HepG2 (cell line): ENCODE measurements at regions of chr20 and their contacts with region 1.

Region 1: GRCh38 chr20:19661717-19662636 is 96.1 kb upstream of the RIN2 start:
- DNase-seq: peak; percentile 62
- ATAC-seq: peak; percentile 80
- H3K4me3 ChIP-seq: no peak overlapping the region
- H3K27ac ChIP-seq: no peak overlapping the region
- H3K4me1 ChIP-seq: peaks cover 32% of the 10 kb centered on the region
- H3K27me3 ChIP-seq: peaks cover 0 to 20% of the 10 kb centered on the region in 2 experiments; a peak in 2 of 5 replicates
- CTCF ChIP-seq: peak; percentile 99
- EP300 ChIP-seq: no peak
- POLR2A ChIP-seq: no peak
- RAD21 ChIP-seq: peak; percentile 91

Region 2: DNA sequence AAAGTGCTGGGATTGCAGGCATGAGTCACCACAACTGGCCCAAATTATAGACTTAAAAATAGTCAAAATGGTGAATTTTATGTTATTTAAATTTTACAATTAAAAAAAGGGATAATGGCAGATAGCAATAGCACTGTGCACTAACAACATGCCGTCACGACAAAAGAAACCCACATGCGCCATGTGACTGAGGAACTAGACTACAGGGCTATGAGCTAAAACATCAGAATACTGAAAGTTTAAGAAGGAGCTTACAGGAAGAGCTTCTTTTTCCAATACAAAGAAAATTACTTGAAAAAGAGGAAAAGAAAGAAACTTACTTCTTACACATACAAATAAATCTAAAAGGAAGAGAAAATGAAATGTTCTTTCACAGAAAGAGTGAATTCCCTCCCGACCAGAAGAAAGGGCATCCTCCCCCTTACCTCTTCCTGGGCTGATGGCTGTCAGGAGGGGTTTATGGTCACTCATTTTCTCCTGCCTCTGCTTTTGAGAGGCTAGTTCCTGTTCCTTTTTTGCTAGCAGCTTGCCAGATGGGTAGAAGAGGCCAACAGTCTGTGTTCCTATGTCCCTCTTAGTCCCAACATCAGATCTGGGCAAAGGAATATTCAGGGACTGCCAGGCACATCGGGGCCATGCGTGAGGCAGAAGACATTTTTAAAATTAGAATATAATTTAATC is 1249.6 kb before region 1 on chr20:
- CTCF ChIA-PET with region 1: interaction called, 3 read pairs
- POLR2A ChIA-PET with region 1: no interaction called
- in situ Hi-C with region 1: no loop called
- intact Hi-C with region 1: loop called (anchors 10 kb)
- DNase-seq: no peak
- ATAC-seq: no peak
- H3K4me3 ChIP-seq: no peak overlapping the region
- H3K27ac ChIP-seq: no peak overlapping the region
- H3K4me1 ChIP-seq: peaks cover 13% of the 10 kb centered on the region
- H3K27me3 ChIP-seq: no peaks in the 10 kb centered on the region
- CTCF ChIP-seq: no peak
- EP300 ChIP-seq: no peak
- POLR2A ChIP-seq: no peak
- RAD21 ChIP-seq: no peak

Region 3: GRCh38 chr20:19074828-19075516 is 587.0 kb before region 1 on chr20:
- CTCF ChIA-PET with region 1: no interaction called
- POLR2A ChIA-PET with region 1: no interaction called
- in situ Hi-C with region 1: loop called (anchors 10 kb)
- intact Hi-C with region 1: loop called (anchors 1 kb)
- DNase-seq: no peak
- ATAC-seq: peak; percentile 19; the same call in 1 of the 3 replicates
- H3K4me3 ChIP-seq: no peak overlapping the region
- H3K27ac ChIP-seq: no peak overlapping the region
- H3K4me1 ChIP-seq: no peaks in the 10 kb centered on the region
- H3K27me3 ChIP-seq: peaks cover 0 to 2% of the 10 kb centered on the region in 2 experiments; a peak in 3 of 5 replicates
- CTCF ChIP-seq: no peak
- EP300 ChIP-seq: no peak
- POLR2A ChIP-seq: no peak
- RAD21 ChIP-seq: no peak

Region 4: DNA sequence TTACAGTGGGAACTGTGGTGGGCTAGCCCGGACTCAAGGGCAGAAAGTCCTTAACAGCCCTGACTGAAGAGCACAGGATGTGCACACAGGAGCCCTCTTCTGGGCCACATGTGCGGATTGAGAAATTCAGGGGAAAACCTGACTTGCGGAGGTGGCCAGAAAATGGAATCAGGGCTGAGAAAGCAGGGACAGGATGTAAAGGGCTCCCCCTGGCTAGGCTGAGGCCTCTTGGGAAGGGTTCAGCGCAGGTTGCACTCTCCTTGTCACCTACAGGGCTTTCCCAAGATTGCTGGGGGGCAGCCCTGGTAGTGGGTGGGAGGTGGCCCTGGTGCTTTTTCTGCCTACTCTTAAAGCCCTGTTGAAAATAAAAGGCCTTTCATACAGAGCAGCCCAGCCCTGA is 198.4 kb before region 1 on chr20:
- CTCF ChIA-PET with region 1: no interaction called
- POLR2A ChIA-PET with region 1: no interaction called
- in situ Hi-C with region 1: no loop called
- intact Hi-C with region 1: loop called (anchors 2 kb)
- DNase-seq: no peak
- ATAC-seq: no peak; the same call in 2 of the 3 replicates
- H3K4me3 ChIP-seq: no peak overlapping the region
- H3K27ac ChIP-seq: no peak overlapping the region
- H3K4me1 ChIP-seq: no peaks in the 10 kb centered on the region
- H3K27me3 ChIP-seq: peaks cover 0 to 11% of the 10 kb centered on the region in 2 experiments; a peak in 1 of 5 replicates
- CTCF ChIP-seq: no peak
- EP300 ChIP-seq: no peak
- POLR2A ChIP-seq: no peak
- RAD21 ChIP-seq: no peak

Region 5: DNA sequence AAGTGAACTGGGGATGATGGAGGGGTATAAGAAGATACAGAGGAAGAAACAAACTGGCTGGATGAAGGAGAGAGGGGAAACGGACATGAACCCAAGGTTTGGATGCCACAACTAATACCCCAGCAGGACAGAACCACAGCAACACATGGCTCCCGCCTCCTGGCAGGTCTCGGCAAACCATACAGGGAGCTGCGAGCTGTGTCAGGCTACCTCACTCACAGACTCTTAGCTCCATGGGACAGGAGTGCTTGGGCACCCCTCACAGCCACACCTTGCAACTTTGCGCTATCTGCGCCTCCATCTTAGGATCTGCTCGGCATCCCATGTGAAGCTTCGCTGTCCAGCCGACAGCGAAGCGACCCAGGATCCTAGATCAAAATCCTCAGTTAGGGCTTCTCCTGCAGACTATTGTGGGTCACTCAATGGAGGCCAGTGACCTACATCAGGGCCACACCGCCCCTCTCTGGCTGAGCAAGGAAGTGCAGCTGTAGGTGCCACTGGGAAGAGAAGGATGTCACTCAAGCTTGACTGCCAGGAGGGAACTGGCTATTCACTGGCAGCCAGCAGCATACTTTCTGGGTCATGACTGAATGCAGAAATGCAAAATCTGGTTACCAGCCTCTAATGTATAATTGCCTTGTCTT is 78.3 kb before region 1 on chr20:
- CTCF ChIA-PET with region 1: interaction called, 7 read pairs
- POLR2A ChIA-PET with region 1: no interaction called
- in situ Hi-C with region 1: loop called (anchors 5 kb)
- intact Hi-C with region 1: loop called (anchors 1 kb)
- DNase-seq: peak; percentile 51
- ATAC-seq: peak; percentile 89
- H3K4me3 ChIP-seq: no peak overlapping the region
- H3K27ac ChIP-seq: no peak overlapping the region
- H3K4me1 ChIP-seq: no peaks in the 10 kb centered on the region
- H3K27me3 ChIP-seq: peaks cover 4 to 53% of the 10 kb centered on the region in 2 experiments; a peak in 4 of 5 replicates
- CTCF ChIP-seq: peak; percentile 90
- EP300 ChIP-seq: no peak
- POLR2A ChIP-seq: no peak
- RAD21 ChIP-seq: peak; percentile 76

Region 6: DNA sequence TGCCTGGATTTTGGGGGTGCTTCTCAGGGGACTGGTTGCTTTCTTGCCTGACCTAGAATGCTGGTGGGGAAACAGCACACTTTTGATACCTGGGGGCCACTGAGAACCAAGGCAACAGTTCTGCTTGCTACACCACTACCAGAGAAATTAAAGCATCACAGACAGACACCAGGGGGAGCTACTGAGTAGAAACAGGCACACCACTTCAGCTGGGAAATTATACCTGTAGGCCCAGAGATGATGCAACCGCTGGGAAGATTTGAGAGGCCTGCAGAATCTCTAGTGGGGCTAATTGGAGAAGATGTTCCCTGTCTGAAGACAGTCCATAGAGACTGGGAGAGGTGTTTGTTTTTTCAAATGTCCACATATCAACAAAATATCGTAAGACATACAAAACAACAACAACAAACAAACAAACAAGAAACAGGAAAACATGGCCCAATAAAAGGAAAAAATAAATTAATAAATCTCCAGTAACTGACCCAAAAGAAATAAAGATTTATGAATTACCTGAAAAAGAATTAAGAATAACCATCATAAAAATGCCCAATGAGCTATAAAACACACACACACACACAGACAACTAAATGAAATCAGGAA is 33.3 kb before region 1 on chr20:
- CTCF ChIA-PET with region 1: interaction called, 38 read pairs
- POLR2A ChIA-PET with region 1: no interaction called
- in situ Hi-C with region 1: no loop called
- intact Hi-C with region 1: loop called (anchors 1 kb)
- DNase-seq: peak; percentile 84
- ATAC-seq: peak; percentile 96
- H3K4me3 ChIP-seq: no peak overlapping the region
- H3K27ac ChIP-seq: no peak overlapping the region
- H3K4me1 ChIP-seq: peaks cover 15% of the 10 kb centered on the region
- H3K27me3 ChIP-seq: peaks cover 0 to 5% of the 10 kb centered on the region in 2 experiments; a peak in 1 of 5 replicates
- CTCF ChIP-seq: peak; percentile 84
- EP300 ChIP-seq: no peak
- POLR2A ChIP-seq: no peak
- RAD21 ChIP-seq: peak; percentile 58

Region 7: GRCh38 chr20:19673575-19673974 is 11.6 kb after region 1 on chr20:
- CTCF ChIA-PET with region 1: no interaction called
- POLR2A ChIA-PET with region 1: no interaction called
- in situ Hi-C with region 1: no loop called
- intact Hi-C with region 1: no loop called
- DNase-seq: no peak
- ATAC-seq: no peak
- H3K4me3 ChIP-seq: no peak overlapping the region
- H3K27ac ChIP-seq: no peak overlapping the region
- H3K4me1 ChIP-seq: peaks cover 5% of the 10 kb centered on the region
- H3K27me3 ChIP-seq: peaks cover 3 to 21% of the 10 kb centered on the region in 2 experiments; a peak in 3 of 5 replicates
- CTCF ChIP-seq: no peak
- EP300 ChIP-seq: no peak
- POLR2A ChIP-seq: no peak
- RAD21 ChIP-seq: no peak

Region 8: GRCh38 chr20:19692685-19693119 is 30.7 kb after region 1 on chr20:
- CTCF ChIA-PET with region 1: no interaction called
- POLR2A ChIA-PET with region 1: no interaction called
- in situ Hi-C with region 1: no loop called
- intact Hi-C with region 1: no loop called
- DNase-seq: peak; percentile 37
- ATAC-seq: peak; percentile 63
- H3K4me3 ChIP-seq: no peak overlapping the region
- H3K27ac ChIP-seq: no peak overlapping the region
- H3K4me1 ChIP-seq: no peaks in the 10 kb centered on the region
- H3K27me3 ChIP-seq: 0 out of 5 replicates have a peak, but pooled peaks cover 0 to 13% of the 10 kb centered on the region in 2 experiments
- CTCF ChIP-seq: peak; percentile 92
- EP300 ChIP-seq: no peak
- POLR2A ChIP-seq: no peak
- RAD21 ChIP-seq: peak; percentile 68; the same call in 1 of the 2 replicates